Colonic mucosa (tissue), 4 donors: ENCODE measurements at regions of chr2 and their contacts with region 1.

Region 1: DNA sequence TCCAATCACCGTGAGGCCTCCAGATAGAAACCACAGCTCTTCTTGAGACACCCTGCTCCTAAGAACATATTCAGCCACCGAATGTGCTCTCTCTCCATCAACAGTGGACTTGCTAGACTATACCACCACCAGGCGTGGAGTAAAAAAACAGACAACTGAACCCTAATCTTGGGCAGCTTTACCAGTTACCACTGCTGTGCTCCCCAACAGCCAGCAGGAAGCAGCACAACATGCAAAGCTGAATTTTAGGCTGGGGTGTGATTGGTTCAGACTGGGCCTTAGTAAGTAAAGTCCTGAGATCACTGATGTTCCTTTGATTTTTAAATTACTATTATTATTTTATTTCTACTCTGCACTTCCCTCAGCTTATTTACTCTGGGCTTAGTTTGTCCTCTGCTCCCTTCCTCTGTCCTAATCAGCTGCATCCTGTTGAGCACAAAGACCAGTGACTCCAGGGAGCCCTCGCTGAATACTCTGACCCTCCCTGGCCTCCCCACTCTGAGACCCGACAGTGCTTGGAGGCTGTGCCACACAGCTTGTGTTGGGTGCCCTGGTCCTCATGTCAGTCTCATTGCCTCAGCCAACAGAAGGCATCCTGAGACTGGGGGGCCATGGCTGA is 21.9 kb downstream of the MRPL35 start:
- DNase-seq: peak; percentile 37
- H3K4me3 ChIP-seq: no peak overlapping the region
- H3K27ac ChIP-seq: no peak overlapping the region
- H3K4me1 ChIP-seq: no peaks in the 10 kb centered on the region
- H3K27me3 ChIP-seq: no peaks in the 10 kb centered on the region
- CTCF ChIP-seq: peak; percentile 87

Region 2: DNA sequence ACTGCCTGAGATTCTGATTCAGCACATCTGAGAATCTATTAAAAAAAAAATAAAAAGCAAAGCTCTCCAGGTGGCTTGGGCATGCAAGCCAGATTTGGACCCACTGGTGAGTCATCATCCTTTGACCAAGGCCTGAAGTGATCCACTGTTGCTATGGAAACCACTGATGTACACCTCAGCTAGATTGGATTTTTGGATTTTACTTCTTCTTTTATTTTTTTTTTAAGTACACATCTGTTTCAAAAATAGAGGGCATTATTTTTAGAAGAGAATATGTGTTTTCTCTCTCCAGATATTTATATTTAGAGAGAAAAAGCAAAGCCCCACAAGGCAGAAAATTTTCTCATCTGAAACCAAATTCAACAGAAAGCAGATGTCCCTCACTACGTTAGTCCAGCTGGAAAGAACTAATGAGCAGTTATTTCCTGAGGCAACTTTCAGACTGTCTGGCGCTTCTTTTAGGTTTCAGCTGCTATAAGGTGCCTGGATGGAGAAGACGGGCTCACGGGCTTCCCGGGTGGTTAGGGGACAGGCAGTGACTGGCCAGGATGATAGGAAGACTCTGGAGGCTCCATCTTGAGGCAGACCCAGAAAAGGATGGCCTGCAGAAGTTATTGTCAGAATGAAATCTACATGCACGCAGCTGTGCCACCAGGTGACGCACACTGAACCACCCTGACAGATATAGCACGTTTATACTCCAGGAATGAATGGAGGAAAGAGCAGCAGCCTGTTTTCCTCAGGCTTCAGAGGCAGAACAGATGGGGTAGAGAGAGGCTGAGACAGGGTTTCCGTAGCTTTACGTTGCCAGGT is 28.6 kb after region 1 on chr2:
- intact Hi-C with region 1: no loop called
- DNase-seq: peak; percentile 54
- H3K4me3 ChIP-seq: no peak overlapping the region
- H3K27ac ChIP-seq: peak overlapping the region; percentile 9
- H3K4me1 ChIP-seq: no peaks in the 10 kb centered on the region
- H3K27me3 ChIP-seq: no peaks in the 10 kb centered on the region
- CTCF ChIP-seq: peak; percentile 45

Region 3: DNA sequence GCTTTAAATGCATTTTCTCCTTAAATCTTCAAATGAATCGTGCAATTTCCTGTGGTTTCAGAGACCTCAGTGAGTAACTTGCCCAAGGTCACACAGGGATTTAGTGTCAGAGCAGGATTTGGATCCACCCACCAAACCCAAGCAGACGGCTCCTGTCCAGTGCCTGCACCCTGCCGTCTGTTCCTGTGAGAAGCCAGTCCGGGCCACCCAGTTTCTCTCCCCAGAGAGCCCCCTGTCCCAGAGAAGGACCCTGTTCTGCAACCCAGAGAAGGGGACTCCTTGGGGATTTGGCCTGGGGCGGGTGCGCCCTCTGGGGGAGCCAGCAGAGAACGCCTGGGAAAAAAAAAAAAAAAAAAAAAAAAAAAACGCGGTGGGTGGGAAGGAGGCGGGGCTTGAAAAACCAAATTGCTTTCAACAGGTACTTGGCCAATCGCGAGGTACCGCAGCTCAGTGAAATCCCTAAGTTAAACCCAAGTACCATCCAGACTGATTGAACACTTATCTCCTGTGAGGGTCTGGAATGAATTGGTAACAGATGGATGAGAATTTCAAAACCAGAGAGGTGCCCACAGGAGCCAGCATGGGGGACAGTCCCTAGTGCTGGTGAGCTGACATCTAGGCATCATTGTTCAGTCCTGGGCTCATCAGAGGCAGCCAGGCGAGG is 147.1 kb after region 1 on chr2:
- intact Hi-C with region 1: loop called (anchors 2 kb)
- DNase-seq: peak; percentile 44
- H3K4me3 ChIP-seq: no peak overlapping the region
- H3K27ac ChIP-seq: no peak overlapping the region
- H3K4me1 ChIP-seq: peaks cover 5% of the 10 kb centered on the region
- H3K27me3 ChIP-seq: no peaks in the 10 kb centered on the region
- CTCF ChIP-seq: peak; percentile 68